Spleen (tissue), 13 donors: ENCODE measurements at regions of chr15 and their contacts with region 1.

Region 1: DNA sequence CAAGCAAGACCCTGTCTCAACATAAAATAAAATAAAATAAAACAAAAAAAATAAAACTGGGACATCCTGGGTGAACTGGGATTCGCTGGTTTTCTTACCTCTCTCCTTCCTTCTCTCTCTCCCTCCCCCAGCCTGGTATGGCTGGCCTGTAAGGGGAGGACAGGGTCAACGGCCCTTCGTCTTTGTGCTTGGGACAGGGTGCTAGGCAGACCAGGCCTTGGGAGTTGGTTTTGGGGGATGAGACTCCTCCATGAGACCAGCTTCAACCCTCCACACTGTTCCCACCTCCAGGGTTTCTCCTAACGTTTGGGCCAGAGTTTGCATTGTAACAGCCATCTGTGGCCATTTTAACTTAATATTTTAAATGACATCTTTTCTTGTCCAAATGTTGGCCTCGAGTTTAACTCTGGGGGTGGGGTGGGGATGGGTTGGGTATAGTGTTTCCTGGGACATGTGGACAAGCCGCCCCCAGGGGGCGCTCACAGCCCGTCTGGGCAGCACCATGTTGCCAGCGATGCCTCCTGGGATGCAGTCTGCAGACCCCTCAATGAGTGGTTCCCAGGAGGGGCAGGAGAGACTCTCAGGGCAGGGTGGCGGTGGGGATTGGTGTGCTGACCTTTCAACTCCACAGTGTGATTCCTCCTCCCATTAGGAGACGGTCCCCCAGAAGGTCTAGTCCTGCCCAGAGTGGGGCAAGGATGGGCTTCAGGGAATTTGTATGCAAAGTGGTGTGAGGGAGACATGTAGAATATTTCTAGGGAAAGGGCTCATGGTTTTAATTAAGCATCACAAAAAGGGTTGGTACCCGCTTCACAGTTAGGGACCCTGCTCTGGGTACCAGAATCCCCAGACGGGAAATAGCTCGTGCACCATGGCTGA is 37.7 kb upstream of the LCTL start:
- DNase-seq: peak; percentile 91
- H3K4me3 ChIP-seq: no peak overlapping the region
- H3K27ac ChIP-seq: no peak overlapping the region
- H3K4me1 ChIP-seq: peaks cover 0 to 6% (median 0%) of the 10 kb centered on the region in 6 donors
- H3K27me3 ChIP-seq: peaks cover 0 to 28% (median 0%) of the 10 kb centered on the region in 7 donors
- CTCF ChIP-seq: peak; percentile 43 to 86 (median 66)
- POLR2A ChIP-seq: no peak

Region 2: GRCh38 chr15:66524838-66525237 is 78.7 kb before region 1 on chr15:
- intact Hi-C with region 1: no loop called
- DNase-seq: no peak
- H3K4me3 ChIP-seq: no peak overlapping the region
- H3K27ac ChIP-seq: no peak overlapping the region
- H3K4me1 ChIP-seq: no peaks in the 10 kb centered on the region
- H3K27me3 ChIP-seq: no peaks in the 10 kb centered on the region
- CTCF ChIP-seq: no peak
- POLR2A ChIP-seq: no peak

Region 3: GRCh38 chr15:66774001-66774814 is 170.7 kb after region 1 on chr15:
- intact Hi-C with region 1: loop called (anchors 5 kb)
- DNase-seq: peak; percentile 88
- H3K4me3 ChIP-seq: no peak overlapping the region
- H3K27ac ChIP-seq: peak overlapping the region in 6 of 8 donors; percentile 4 to 47 (median 24)
- H3K4me1 ChIP-seq: peaks cover 0 to 37% (median 13%) of the 10 kb centered on the region in 6 donors
- H3K27me3 ChIP-seq: no peaks in the 10 kb centered on the region
- CTCF ChIP-seq: peak; percentile 70 to 91 (median 82)
- POLR2A ChIP-seq: no peak